AG04450 (cell line): ENCODE measurements at regions of chr9 and their contacts with region 1.

Region 1: GRCh38 chr9:101465392-101465791 is 29.8 kb upstream of the ALDOB start:
- DNase-seq: no peak
- H3K4me3 ChIP-seq: no peak overlapping the region
- H3K27ac ChIP-seq: no peak overlapping the region
- H3K27me3 ChIP-seq: no peaks in the 10 kb centered on the region
- CTCF ChIP-seq: peak; percentile 51

Region 2: DNA sequence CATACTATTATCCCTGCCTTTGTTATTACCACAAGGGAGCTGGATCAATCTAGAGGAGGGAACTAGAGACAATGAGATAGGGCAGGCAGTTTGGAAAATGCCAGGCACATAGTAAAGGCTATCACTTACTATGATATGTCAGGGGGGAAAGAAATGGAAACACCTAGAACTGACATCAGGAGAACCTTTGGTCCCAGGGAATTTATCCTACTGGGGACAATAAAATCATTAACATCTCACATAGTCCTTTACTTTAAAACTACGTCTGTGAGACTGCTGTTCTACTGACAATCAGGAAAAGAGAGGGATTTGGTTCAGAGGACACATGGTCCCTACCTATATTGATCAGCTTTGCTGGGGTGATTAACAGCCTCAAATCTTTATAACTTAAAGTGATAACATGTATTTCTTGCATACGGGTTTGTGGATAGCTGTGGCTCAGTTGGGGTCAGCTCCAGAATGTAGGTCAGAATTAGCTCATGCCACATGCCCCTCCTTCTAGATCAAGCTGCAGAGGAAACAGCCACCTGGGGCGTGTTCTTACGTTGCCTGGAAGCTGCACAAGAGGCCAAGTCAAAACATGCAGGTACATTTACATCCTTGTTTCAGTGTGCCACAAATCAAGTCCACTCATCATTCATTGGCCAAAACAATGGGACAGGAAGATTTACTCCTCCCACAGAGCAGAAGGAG is 14.1 kb after region 1 on chr9:
- CTCF ChIA-PET with region 1: interaction called, 93 read pairs
- POLR2A ChIA-PET with region 1: no interaction called
- DNase-seq: no peak
- H3K4me3 ChIP-seq: no peak overlapping the region
- H3K27ac ChIP-seq: no peak overlapping the region
- H3K27me3 ChIP-seq: no peaks in the 10 kb centered on the region
- CTCF ChIP-seq: no peak

Region 3: GRCh38 chr9:101618698-101619097 is 153.3 kb after region 1 on chr9:
- CTCF ChIA-PET with region 1: no interaction called
- POLR2A ChIA-PET with region 1: no interaction called
- DNase-seq: no peak
- H3K4me3 ChIP-seq: no peak overlapping the region
- H3K27ac ChIP-seq: no peak overlapping the region
- H3K27me3 ChIP-seq: no peaks in the 10 kb centered on the region
- CTCF ChIP-seq: no peak